Activated naive CD4-positive, alpha-beta T cell treated with anti-CD3 and anti-CD28 coated beads for 36 hours (primary cell): ENCODE measurements at regions of chr2 and their contacts with region 1.

Region 1: GRCh38 chr2:68031542-68032160 is 31.2 kb downstream of the C1D start:
- DNase-seq: no peak
- H3K4me3 Mint-ChIP-seq: no peak overlapping the region
- H3K27ac Mint-ChIP-seq: no peak overlapping the region
- H3K4me1 Mint-ChIP-seq: no peaks in the 10 kb centered on the region
- H3K27me3 Mint-ChIP-seq: no peaks in the 10 kb centered on the region

Region 2: DNA sequence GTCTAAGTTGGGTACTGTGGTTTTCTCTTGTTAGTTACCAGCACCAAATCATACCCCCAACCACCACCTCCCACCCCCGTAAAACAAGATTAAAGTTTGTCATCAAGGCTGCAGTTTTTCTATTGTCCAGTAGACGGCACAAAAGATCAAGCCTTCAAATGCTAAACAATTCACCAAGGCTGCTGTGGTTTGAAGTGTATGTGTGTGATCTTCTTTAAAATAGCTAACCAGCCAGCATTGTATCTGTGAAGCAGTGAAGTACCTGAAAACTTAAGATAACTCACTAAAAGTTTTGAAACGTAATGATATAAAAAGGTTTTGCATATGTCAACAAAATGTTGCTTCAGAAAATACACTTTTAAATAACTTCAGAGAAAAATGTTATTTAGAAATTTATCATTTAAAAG is 1602.6 kb before region 1 on chr2:
- CTCF ChIA-PET with region 1: no interaction called
- intact Hi-C with region 1: loop called (anchors 2 kb)
- DNase-seq: no peak
- H3K4me3 Mint-ChIP-seq: no peak overlapping the region
- H3K27ac Mint-ChIP-seq: no peak overlapping the region
- H3K4me1 Mint-ChIP-seq: peaks cover 12% of the 10 kb centered on the region
- H3K27me3 Mint-ChIP-seq: peaks cover 70% of the 10 kb centered on the region

Region 3: DNA sequence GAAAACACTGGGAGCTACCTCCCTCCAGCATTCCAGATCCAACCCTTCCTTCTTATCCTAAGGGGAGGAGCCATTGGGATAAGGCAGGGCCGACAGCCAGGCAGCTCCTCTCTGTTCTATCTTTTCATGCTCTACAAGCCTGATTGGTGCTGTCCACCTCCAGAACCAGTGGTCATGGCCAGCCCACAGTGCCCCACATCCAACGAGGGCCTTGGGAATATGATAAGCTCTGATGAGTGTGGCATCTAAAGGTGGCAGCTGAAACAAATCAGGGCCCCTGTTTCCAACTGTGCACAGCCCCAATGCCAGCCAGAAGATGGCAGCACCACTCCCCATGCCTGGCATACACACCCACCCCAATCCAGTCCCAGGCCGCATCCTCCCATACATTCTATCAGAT is 298.1 kb before region 1 on chr2:
- CTCF ChIA-PET with region 1: no interaction called
- intact Hi-C with region 1: loop called (anchors 1 kb)
- DNase-seq: peak; percentile 16
- H3K4me3 Mint-ChIP-seq: no peak overlapping the region
- H3K27ac Mint-ChIP-seq: no peak overlapping the region
- H3K4me1 Mint-ChIP-seq: no peaks in the 10 kb centered on the region
- H3K27me3 Mint-ChIP-seq: no peaks in the 10 kb centered on the region

Region 4: GRCh38 chr2:67782443-67782842 is 249.2 kb before region 1 on chr2:
- CTCF ChIA-PET with region 1: no interaction called
- intact Hi-C with region 1: no loop called
- DNase-seq: no peak
- H3K4me3 Mint-ChIP-seq: no peak overlapping the region
- H3K27ac Mint-ChIP-seq: no peak overlapping the region
- H3K4me1 Mint-ChIP-seq: no peaks in the 10 kb centered on the region
- H3K27me3 Mint-ChIP-seq: no peaks in the 10 kb centered on the region

Region 5: GRCh38 chr2:67840460-67841068 is 191.1 kb before region 1 on chr2:
- CTCF ChIA-PET with region 1: no interaction called
- intact Hi-C with region 1: loop called (anchors 1 kb)
- DNase-seq: peak; percentile 58
- H3K4me3 Mint-ChIP-seq: no peak overlapping the region
- H3K27ac Mint-ChIP-seq: no peak overlapping the region
- H3K4me1 Mint-ChIP-seq: no peaks in the 10 kb centered on the region
- H3K27me3 Mint-ChIP-seq: peaks cover 4% of the 10 kb centered on the region

Region 6: DNA sequence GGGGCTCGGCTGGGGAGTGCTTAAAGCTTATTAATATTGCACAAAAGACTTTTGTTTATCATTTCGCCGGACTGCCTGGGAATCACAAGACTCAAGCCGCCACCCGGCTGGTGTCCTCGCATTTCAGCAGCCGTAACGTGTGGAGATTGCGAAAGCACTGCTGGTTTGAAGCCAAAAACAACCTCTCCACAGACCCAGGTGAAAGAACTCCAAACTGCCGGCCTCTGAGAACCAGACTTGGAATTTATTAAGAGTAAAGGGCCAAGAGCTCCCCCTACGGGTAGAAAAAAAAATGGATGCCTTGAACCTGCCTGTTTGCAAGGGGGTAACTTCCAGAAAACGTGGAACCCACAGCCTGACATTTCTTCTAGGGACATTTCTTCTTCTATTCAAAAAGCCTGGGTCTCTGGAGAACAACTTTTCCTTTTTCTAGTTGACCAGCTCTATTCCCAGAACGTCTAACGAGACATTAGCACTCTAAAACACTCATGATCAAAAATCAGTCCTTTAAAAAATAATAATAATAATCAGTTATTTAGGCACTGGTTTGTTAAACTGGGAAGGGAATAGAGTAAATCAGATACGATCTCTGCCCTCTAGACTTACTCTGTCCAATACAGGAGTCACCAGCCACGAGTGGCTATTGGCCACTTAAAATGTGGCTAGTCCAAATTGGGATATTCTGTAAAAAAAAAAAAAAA is 185.1 kb before region 1 on chr2:
- CTCF ChIA-PET with region 1: interaction called, 5 read pairs
- intact Hi-C with region 1: loop called (anchors 1 kb)
- DNase-seq: peak; percentile 55
- H3K4me3 Mint-ChIP-seq: no peak overlapping the region
- H3K27ac Mint-ChIP-seq: no peak overlapping the region
- H3K4me1 Mint-ChIP-seq: no peaks in the 10 kb centered on the region
- H3K27me3 Mint-ChIP-seq: peaks cover 21% of the 10 kb centered on the region

Region 7: DNA sequence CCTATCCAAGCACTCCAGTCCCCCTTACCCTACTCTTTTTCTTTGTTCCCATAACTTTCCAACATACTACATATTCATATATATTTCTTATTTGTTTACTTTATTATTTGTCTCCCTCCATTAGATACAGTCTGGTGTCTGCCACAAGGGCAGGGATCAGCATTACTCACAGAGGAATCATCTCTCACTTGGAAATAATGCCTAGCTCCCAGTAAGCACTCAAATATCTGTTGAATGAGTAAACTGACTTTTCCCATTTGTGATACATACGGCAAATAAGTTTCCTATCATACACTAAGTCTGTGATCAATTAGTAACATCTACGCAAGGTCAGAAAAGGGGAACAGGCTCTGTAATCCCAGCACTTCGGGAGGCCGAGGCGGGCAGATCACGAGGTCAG is 12.4 kb after region 1 on chr2:
- CTCF ChIA-PET with region 1: no interaction called
- intact Hi-C with region 1: no loop called
- DNase-seq: no peak
- H3K4me3 Mint-ChIP-seq: no peak overlapping the region
- H3K27ac Mint-ChIP-seq: no peak overlapping the region
- H3K4me1 Mint-ChIP-seq: peaks cover 7% of the 10 kb centered on the region
- H3K27me3 Mint-ChIP-seq: no peaks in the 10 kb centered on the region

Region 8: GRCh38 chr2:68110102-68110501 is 78.5 kb after region 1 on chr2:
- CTCF ChIA-PET with region 1: no interaction called
- intact Hi-C with region 1: no loop called
- DNase-seq: no peak
- H3K4me3 Mint-ChIP-seq: no peak overlapping the region
- H3K27ac Mint-ChIP-seq: no peak overlapping the region
- H3K4me1 Mint-ChIP-seq: no peaks in the 10 kb centered on the region
- H3K27me3 Mint-ChIP-seq: no peaks in the 10 kb centered on the region